ENCODE measurements at regions of chr10 and their contacts with region 1.

Region 1: GRCh38 chr10:124221356-124222317 is 128.2 kb upstream of the CHST15 start:
- DNase-seq: no peak
- H3K4me3 ChIP-seq: peak overlapping the region in 1 of 2 donors; percentile 6
- H3K27ac ChIP-seq: peak overlapping the region; percentile 62 to 71
- H3K4me1 ChIP-seq: peaks cover 5 to 60% (median 56%) of the 10 kb centered on the region in 4 donors
- H3K27me3 ChIP-seq: no peaks in the 10 kb centered on the region
- CTCF ChIP-seq: no peak

Region 2: GRCh38 chr10:124092860-124093773 is 128.5 kb before region 1 on chr10 and contains the start of gene CHST15:
- intact Hi-C with region 1: loop called (anchors 10 kb)
- DNase-seq: peak; percentile 53 to 81
- H3K4me3 ChIP-seq: peak within 1 kb of the TSS; percentile 77 to 78
- H3K27ac ChIP-seq: peak within 1 kb of the TSS; percentile 88 to 93
- H3K4me1 ChIP-seq: peaks cover 0 to 37% (median 22%) of the 10 kb centered on the region in 4 donors
- H3K27me3 ChIP-seq: no peaks in the 10 kb centered on the region
- CTCF ChIP-seq: peak; percentile 17 to 21

Region 3: DNA sequence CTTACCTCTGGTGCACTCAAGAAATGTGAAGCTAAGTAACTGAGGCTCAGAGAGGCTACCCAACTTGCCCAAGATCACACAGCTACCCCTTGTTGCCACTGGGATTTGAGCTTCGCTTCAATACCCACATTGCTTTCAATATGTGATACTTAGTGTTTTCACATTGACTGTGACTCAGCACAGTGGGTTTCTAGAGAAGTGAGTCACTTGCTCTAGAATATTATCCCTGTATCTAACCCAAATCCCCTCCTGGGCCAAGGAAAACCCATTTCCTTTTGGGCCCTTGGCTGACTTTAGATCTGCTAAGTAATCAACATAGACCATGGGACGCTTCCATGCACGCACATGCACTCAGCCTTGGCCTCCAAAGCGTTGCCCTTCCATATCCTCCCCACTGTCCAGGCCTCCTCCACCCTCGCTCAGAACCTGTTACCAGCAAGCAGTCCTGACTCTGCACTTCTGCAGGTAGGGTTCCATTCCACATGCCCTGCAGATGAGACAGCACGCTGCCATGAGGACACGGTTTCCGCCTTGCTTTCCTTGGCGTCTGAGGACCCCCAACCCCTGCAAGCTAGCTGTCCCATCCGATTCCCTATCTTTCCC is 40.6 kb before region 1 on chr10:
- intact Hi-C with region 1: no loop called
- DNase-seq: no peak
- H3K4me3 ChIP-seq: no peak overlapping the region
- H3K27ac ChIP-seq: peak overlapping the region; percentile 72 to 82
- H3K4me1 ChIP-seq: peaks cover 0 to 39% (median 16%) of the 10 kb centered on the region in 4 donors
- H3K27me3 ChIP-seq: no peaks in the 10 kb centered on the region
- CTCF ChIP-seq: no peak

Region 4: GRCh38 chr10:124387540-124387874 is 165.9 kb after region 1 on chr10:
- intact Hi-C with region 1: no loop called
- DNase-seq: peak; percentile 5 to 47
- H3K4me3 ChIP-seq: no peak overlapping the region
- H3K27ac ChIP-seq: no peak overlapping the region
- H3K4me1 ChIP-seq: peaks cover 0 to 23% (median 19%) of the 10 kb centered on the region in 4 donors
- H3K27me3 ChIP-seq: no peaks in the 10 kb centered on the region
- CTCF ChIP-seq: no peak

Measured in tibial artery (tissue), 4 donors.